PC-9 (cell line): ENCODE measurements at regions of chr5 and their contacts with region 1.

Region 1: GRCh38 chr5:80921026-80921425 is 39.1 kb upstream of the RASGRF2 start:
- DNase-seq: no peak
- H3K4me3 ChIP-seq: no peak overlapping the region
- H3K27ac ChIP-seq: no peak overlapping the region
- H3K4me1 ChIP-seq: peaks cover 14% of the 10 kb centered on the region
- H3K27me3 ChIP-seq: no peaks in the 10 kb centered on the region
- CTCF ChIP-seq: no peak

Region 2: GRCh38 chr5:80777347-80778287 is 143.4 kb before region 1 on chr5:
- CTCF ChIA-PET with region 1: no interaction called
- POLR2A ChIA-PET with region 1: interaction called, 12 read pairs
- intact Hi-C with region 1: no loop called
- DNase-seq: no peak
- H3K4me3 ChIP-seq: no peak overlapping the region
- H3K27ac ChIP-seq: no peak overlapping the region
- H3K4me1 ChIP-seq: peaks cover 9% of the 10 kb centered on the region
- H3K27me3 ChIP-seq: no peaks in the 10 kb centered on the region
- CTCF ChIP-seq: no peak

Region 3: DNA sequence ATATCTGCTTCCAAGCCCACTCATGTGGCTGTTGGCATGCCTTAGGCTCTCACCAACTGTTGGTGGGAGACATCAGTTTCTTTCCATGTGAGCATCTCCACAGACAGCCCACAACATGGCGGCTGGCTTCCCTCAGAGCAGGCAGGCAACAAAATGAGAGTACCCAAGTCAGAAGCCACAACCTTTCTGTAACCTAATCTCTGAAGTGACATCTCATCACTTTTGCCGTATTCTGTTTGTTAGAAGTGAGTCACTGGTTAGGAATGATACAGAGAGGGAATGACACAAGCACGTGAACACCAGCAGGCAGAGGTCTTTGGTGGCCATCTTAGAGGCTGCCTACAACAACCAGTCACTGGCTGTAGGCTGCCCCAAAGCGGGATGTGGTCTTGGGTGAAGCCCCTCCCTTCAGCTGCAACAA is 49.5 kb before region 1 on chr5:
- CTCF ChIA-PET with region 1: no interaction called
- POLR2A ChIA-PET with region 1: no interaction called
- intact Hi-C with region 1: no loop called
- DNase-seq: peak; percentile 11 to 55
- H3K4me3 ChIP-seq: no peak overlapping the region
- H3K27ac ChIP-seq: no peak overlapping the region
- H3K4me1 ChIP-seq: no peaks in the 10 kb centered on the region
- H3K27me3 ChIP-seq: no peaks in the 10 kb centered on the region
- CTCF ChIP-seq: no peak

Region 4: GRCh38 chr5:81105261-81105877 is 184.3 kb after region 1 on chr5:
- CTCF ChIA-PET with region 1: no interaction called
- POLR2A ChIA-PET with region 1: no interaction called
- intact Hi-C with region 1: loop called (anchors 10 kb)
- DNase-seq: no peak
- H3K4me3 ChIP-seq: no peak overlapping the region
- H3K27ac ChIP-seq: no peak overlapping the region
- H3K4me1 ChIP-seq: no peaks in the 10 kb centered on the region
- H3K27me3 ChIP-seq: no peaks in the 10 kb centered on the region
- CTCF ChIP-seq: no peak